ENCODE measurements at regions of chr1 and their contacts with region 1.

Region 1: DNA sequence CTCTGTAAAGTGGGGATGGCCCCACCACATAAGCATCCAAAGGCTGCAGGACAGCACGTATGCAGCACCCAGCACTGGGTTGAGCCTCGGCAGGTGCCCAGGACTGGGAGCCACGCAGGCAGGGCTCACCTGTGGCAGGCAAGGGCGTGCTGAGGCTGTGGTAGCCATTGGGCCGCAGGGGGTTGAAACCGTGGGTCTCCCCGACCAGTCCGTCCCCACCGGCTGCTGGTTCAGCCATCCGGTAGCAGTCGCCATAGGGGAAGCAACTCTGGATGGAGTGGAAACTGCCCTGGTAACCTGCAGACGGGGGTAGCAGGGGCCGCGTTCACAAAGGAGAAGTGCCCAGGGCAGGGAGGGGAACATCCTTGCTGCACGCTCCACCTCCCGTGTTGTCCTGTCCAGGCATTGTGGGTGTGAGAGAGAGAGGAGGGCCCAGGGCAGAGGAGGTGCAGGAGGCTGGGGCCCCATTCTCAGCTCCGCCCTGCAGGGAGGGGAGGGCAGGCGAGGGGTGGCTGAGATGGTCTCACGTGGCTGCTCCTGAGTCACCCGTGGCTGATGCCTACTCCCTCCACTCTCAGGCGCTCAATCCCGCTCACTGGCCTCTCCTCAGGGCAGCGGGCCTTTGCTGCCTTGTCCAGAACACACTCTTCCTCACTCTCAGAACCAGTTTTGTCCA is 49.9 kb downstream of the DMRTB1 start:
- DNase-seq: no peak

Region 2: GRCh38 chr1:52306227-52307006 is 1202.7 kb before region 1 on chr1:
- intact Hi-C with region 1: loop called in 1 of 2 experiments (anchors 10 kb)
- DNase-seq: no peak

Region 3: DNA sequence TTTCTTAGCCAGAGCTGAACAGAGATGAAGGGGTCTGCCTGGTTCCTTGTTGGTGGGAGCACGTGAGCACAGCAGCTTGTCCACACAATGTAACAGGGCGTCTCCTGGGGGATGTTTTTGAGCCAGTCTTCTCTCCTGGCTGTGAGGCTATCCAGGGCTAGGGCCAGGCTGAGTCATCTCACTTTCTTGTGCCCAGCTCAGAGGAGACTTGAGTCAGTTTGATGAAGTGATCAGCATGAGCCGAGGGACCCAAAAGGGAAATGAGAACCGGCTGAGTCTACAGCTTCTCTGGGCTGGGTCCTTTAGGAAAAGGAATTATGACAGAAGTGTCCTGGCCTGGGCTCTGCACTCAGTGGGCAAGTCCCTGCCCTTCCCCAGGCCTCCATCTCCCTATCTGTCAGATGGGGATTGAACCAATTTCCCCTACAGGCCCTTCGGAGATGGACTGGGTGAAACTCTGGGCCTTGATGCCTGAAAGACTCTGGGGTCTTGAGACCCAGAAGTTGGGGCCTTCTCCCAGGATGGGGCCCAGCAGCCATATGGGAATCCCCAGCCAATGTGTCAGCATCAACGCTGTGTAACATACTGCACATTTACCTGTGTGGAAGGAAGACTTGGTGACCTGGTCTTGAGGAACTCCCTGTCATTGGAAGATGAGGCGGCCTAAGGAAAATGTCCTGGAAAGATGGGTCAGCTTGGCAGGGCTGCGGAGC is 13.3 kb before region 1 on chr1:
- intact Hi-C with region 1: no loop called
- DNase-seq: peak; percentile 83

Region 4: GRCh38 chr1:53562291-53562980 is 53.3 kb after region 1 on chr1:
- intact Hi-C with region 1: no loop called
- DNase-seq: peak; percentile 23

Region 5: GRCh38 chr1:53811414-53811851 is 302.3 kb after region 1 on chr1:
- intact Hi-C with region 1: no loop called
- DNase-seq: no peak